GM13977 (cell line): ENCODE measurements at regions of chr10 and their contacts with region 1.

Region 1: GRCh38 chr10:126475941-126476645 is 87.8 kb upstream of the ADAM12 start:
- DNase-seq: no peak
- CTCF ChIP-seq: no peak

Region 2: GRCh38 chr10:125982260-125982948 is 493.7 kb before region 1 on chr10:
- in situ Hi-C with region 1: loop called (anchors 25 kb)
- DNase-seq: peak; percentile 42
- CTCF ChIP-seq: peak; percentile 63

Region 3: DNA sequence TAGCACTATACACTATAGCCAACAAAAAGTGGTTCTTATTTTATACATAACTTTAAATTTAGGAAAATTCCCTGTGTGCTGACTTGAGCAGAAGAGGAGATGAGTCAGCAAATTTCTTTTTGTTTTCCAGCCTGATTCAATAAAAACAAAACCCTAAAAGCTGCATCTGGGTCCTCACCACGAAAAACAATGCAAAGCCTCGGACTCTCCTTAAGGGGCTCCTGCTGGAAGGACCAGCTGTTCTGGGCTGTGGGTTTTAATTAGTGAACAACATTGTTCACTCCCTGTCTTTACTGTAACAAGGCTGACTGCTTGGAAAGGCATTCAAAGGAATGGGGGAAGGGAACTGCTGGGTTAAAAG is 327.9 kb before region 1 on chr10:
- in situ Hi-C with region 1: no loop called
- DNase-seq: no peak
- CTCF ChIP-seq: no peak

Region 4: DNA sequence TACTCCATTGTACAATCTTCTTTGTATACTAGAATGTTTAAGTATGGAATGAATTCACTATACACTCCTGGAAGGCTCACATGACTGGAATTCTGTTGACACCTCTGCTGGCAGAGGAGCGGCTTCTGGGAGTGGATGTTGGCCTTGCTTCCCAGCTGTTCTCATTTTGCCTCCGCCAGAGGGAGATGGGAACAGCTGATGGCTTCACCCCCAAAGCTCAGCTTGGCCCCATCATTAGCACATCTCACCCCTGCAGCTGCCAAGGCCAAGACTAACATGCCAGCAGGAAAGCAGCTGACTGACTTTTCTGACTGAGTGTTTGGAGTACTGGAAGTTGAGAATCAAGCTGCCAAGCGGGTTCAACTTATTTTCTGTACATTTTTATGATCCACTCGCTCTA is 102.9 kb before region 1 on chr10:
- in situ Hi-C with region 1: no loop called
- DNase-seq: no peak
- CTCF ChIP-seq: no peak